Naive thymus-derived CD8-positive, alpha-beta T cell (primary cell): ENCODE measurements at regions of chr17 and their contacts with region 1.

Region 1: DNA sequence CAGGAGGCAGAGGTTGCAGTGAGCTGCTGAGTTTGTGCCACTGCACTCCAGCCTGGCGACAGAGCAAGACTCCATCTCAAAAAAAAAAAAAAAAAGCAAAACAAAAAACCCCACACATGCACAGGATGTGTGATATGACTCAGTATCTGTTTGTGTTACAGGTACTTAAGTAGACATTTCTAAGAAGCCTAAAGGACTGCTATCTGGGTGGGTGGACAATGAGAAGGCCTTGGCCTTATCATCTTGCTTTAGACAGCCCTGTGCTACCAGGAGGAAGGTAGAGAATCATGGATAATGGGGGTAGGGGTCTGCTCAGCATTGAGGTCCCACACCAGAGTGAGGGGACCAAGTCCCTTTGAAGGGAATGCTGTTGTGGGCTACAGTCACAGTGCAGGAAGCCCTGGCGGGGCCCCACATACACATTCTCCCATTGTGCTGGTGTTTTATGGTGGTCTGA is 26.7 kb downstream of the PLD6 start:
- DNase-seq: peak in 4 of 10 donors; percentile 26 to 57 (median 48)
- ATAC-seq: peak; percentile 48 to 54
- H3K4me3 Mint-ChIP-seq: peak overlapping the region; percentile 68 to 95 (median 83)
- H3K27ac Mint-ChIP-seq: peak overlapping the region; percentile 73 to 100 (median 97)
- H3K4me1 Mint-ChIP-seq: peaks cover 37 to 94% (median 79%) of the 10 kb centered on the region in 4 donors
- H3K27me3 Mint-ChIP-seq: no peaks in the 10 kb centered on the region

Region 2: GRCh38 chr17:17147821-17148220 is 31.6 kb before region 1 on chr17:
- POLR2A ChIA-PET with region 1: no interaction called
- DNase-seq: no peak
- ATAC-seq: no peak
- H3K4me3 Mint-ChIP-seq: no peak overlapping the region
- H3K27ac Mint-ChIP-seq: no peak overlapping the region
- H3K4me1 Mint-ChIP-seq: peaks cover 6 to 19% (median 15%) of the 10 kb centered on the region in 4 donors
- H3K27me3 Mint-ChIP-seq: no peaks in the 10 kb centered on the region

Region 3: GRCh38 chr17:17200831-17201230 is 21.4 kb after region 1 on chr17:
- POLR2A ChIA-PET with region 1: interaction called, 79 read pairs
- DNase-seq: no peak
- ATAC-seq: no peak
- H3K4me3 Mint-ChIP-seq: no peak overlapping the region
- H3K27ac Mint-ChIP-seq: peak overlapping the region in 1 of 10 donors; percentile 66
- H3K4me1 Mint-ChIP-seq: peaks cover 10 to 39% (median 33%) of the 10 kb centered on the region in 4 donors
- H3K27me3 Mint-ChIP-seq: no peaks in the 10 kb centered on the region

Region 4: DNA sequence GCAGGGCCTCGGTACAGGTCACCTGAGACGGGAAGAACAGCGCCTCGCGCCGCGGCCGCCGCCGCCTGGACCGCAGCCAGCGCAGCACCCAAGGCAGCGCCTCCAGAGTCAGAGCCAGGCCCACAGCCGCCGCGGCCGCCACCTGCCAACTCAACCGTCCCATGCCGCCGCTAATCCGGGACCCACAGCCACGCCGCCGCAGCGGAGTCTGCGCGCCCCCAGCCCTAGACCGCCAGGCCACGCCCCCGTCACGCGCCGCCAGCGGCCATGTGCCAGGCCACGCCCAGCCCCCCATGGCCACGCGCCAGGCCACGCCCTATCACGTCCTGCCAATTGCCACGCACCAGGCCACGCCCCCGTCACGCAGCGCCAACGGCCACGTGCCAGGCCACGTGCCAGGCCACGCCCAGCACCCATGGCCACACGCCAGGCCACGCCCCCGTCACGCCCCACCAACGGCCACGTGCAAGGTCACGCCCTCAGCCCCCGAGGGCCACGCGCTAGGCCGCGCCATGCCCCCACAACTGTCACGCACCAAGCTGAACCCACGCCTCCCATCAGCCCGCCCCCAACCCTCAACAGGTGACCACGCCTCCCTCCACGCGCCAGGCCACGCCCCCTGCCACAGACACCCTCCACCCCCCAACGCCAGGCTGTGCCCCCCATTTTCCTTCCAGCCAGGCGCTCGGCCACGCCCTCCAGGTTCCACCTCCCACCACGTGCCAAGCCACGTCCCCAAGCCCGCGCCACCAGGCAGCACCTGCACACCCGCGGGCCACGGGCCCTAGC is 26.9 kb after region 1 on chr17 and contains the start of gene PLD6:
- POLR2A ChIA-PET with region 1: interaction called, 79 read pairs
- DNase-seq: peak; percentile 87 to 97 (median 94)
- ATAC-seq: peak; percentile 72 to 75
- H3K4me3 Mint-ChIP-seq: peak within 1 kb of the TSS; percentile 75 to 93 (median 90)
- H3K27ac Mint-ChIP-seq: peak within 1 kb of the TSS; percentile 77 to 98 (median 94)
- H3K4me1 Mint-ChIP-seq: peaks cover 14 to 41% (median 30%) of the 10 kb centered on the region in 4 donors
- H3K27me3 Mint-ChIP-seq: no peaks in the 10 kb centered on the region
- polyA plus RNA-seq, gene PLD6: 6.6 to 9.8 (median 8.2) TPM

Region 5: GRCh38 chr17:17237026-17237799 is 57.8 kb after region 1 on chr17 and contains the start of gene FLCN:
- POLR2A ChIA-PET with region 1: interaction called, 33 read pairs
- DNase-seq: peak; percentile 83 to 99 (median 88)
- ATAC-seq: peak; percentile 94
- H3K4me3 Mint-ChIP-seq: peak within 1 kb of the TSS; percentile 91 to 98 (median 96)
- H3K27ac Mint-ChIP-seq: peak within 1 kb of the TSS; percentile 98 to 100 (median 99)
- H3K4me1 Mint-ChIP-seq: peaks cover 19 to 38% (median 30%) of the 10 kb centered on the region in 4 donors
- H3K27me3 Mint-ChIP-seq: no peaks in the 10 kb centered on the region
- polyA plus RNA-seq, gene FLCN: 3.1 to 4.9 (median 4.8) TPM

Region 6: GRCh38 chr17:17269926-17270773 is 90.8 kb after region 1 on chr17:
- POLR2A ChIA-PET with region 1: no interaction called
- DNase-seq: peak in 2 of 10 donors; percentile 20 to 21
- ATAC-seq: no peak
- H3K4me3 Mint-ChIP-seq: no peak overlapping the region
- H3K27ac Mint-ChIP-seq: peak overlapping the region in 2 of 10 donors; percentile 5 to 61
- H3K4me1 Mint-ChIP-seq: peaks cover 0 to 7% (median 4%) of the 10 kb centered on the region in 4 donors
- H3K27me3 Mint-ChIP-seq: no peaks in the 10 kb centered on the region